Testis (tissue), 5 donors: ENCODE measurements at regions of chr22 and their contacts with region 1.

Region 1: DNA sequence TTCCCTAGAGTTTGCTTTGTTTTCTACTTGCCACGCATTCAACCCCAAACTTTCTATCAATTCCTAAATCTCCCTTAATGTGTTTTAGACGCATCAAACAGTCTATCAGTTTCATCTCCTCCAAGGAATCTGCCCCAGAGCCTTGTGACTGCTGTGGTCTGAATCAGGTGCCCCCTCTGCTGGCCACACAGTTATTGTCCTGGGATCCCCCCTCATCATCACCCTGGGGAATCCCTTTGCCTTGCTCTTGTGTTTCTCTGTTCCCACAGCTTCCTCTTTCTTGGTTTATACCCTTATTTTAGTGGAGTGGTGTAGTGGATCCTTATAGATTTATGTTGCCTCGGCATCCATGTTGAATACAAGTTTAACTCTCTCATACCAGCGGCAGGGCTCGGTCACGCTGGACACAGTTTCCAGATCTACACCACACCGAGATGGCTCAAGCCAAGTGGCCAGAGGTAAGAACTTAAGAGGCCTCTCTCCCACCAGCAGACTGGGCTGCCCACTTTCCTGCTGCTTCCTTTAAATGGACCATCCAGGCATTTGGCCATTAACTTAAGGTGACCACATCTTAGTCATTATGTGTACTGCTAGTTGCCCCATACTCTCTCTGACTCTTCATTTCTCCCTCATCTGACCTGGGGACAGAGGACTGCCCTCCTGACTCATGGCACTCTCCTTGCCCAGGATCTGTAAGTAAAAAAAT is 8.2 kb downstream of the UPB1 start:
- DNase-seq: peak; percentile 73
- H3K4me3 ChIP-seq: no peak overlapping the region
- H3K27ac ChIP-seq: no peak overlapping the region
- H3K4me1 ChIP-seq: no peaks in the 10 kb centered on the region
- H3K27me3 ChIP-seq: no peaks in the 10 kb centered on the region
- CTCF ChIP-seq: peak; percentile 37 to 58 (median 50)
- POLR2A ChIP-seq: no peak

Region 2: GRCh38 chr22:24325105-24325757 is 178.1 kb before region 1 on chr22:
- intact Hi-C with region 1: loop called (anchors 10 kb)
- DNase-seq: no peak
- H3K4me3 ChIP-seq: no peak overlapping the region
- H3K27ac ChIP-seq: no peak overlapping the region
- H3K4me1 ChIP-seq: no peaks in the 10 kb centered on the region
- H3K27me3 ChIP-seq: no peaks in the 10 kb centered on the region
- CTCF ChIP-seq: peak in 2 of 3 experiments; percentile 45 to 46
- POLR2A ChIP-seq: no peak

Region 3: DNA sequence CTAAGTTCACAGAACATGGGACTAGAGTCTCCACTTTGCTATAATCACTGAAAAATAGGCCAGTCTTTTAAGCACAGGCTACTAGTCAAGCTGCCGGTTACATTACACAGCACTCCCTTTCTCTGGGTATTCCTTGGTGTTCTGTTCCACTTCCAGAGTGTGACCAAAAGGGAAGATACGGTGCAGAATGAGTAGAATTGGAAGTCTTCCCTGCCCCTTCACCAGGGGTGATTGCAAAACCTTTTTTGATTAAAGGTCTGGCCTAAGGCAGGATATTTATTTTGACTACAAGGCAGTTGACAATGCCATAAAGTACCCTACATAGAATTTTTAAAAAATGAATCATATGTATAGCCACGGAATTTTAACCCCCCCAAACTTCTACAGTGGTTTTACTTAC is 135.4 kb before region 1 on chr22:
- intact Hi-C with region 1: no loop called
- DNase-seq: no peak
- H3K4me3 ChIP-seq: no peak overlapping the region
- H3K27ac ChIP-seq: no peak overlapping the region
- H3K4me1 ChIP-seq: no peaks in the 10 kb centered on the region
- H3K27me3 ChIP-seq: no peaks in the 10 kb centered on the region
- CTCF ChIP-seq: no peak
- POLR2A ChIP-seq: no peak

Region 4: GRCh38 chr22:24423519-24424000 is 79.7 kb before region 1 on chr22:
- intact Hi-C with region 1: loop called (anchors 10 kb)
- DNase-seq: peak; percentile 57
- H3K4me3 ChIP-seq: peak overlapping the region; percentile 57 to 66
- H3K27ac ChIP-seq: no peak overlapping the region
- H3K4me1 ChIP-seq: peaks cover 8% of the 10 kb centered on the region
- H3K27me3 ChIP-seq: no peaks in the 10 kb centered on the region
- CTCF ChIP-seq: peak; percentile 87 to 98 (median 90)
- POLR2A ChIP-seq: no peak

Region 5: DNA sequence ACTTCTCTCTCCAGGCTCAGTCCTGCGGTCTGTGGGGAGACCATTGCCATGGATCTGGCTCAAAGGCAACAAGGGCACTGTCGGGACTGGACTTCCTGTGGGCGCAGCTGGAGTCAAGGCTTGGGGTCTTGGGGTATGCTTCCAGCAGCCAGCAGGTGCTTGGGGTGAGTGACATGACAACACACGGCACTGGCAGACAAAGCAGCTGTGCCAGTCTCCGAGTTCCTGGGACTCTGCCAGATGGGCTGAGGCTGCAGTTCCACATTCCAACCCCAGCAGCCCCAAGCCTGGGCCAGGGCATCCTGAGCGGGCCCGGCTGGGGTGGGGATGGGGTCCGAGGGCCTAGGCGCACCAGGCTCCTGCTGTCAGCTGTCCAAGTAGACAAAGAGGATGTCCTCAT is 39.4 kb after region 1 on chr22:
- intact Hi-C with region 1: no loop called
- DNase-seq: no peak
- H3K4me3 ChIP-seq: no peak overlapping the region
- H3K27ac ChIP-seq: no peak overlapping the region
- H3K4me1 ChIP-seq: peaks cover 14% of the 10 kb centered on the region
- H3K27me3 ChIP-seq: no peaks in the 10 kb centered on the region
- CTCF ChIP-seq: no peak
- POLR2A ChIP-seq: no peak

Region 6: GRCh38 chr22:24744638-24745037 is 241.3 kb after region 1 on chr22:
- intact Hi-C with region 1: no loop called
- DNase-seq: no peak
- H3K4me3 ChIP-seq: no peak overlapping the region
- H3K27ac ChIP-seq: no peak overlapping the region
- H3K4me1 ChIP-seq: no peaks in the 10 kb centered on the region
- H3K27me3 ChIP-seq: no peaks in the 10 kb centered on the region
- CTCF ChIP-seq: no peak
- POLR2A ChIP-seq: no peak